OCI-LY7 (cell line): ENCODE measurements at regions of chr9 and their contacts with region 1.

Region 1: DNA sequence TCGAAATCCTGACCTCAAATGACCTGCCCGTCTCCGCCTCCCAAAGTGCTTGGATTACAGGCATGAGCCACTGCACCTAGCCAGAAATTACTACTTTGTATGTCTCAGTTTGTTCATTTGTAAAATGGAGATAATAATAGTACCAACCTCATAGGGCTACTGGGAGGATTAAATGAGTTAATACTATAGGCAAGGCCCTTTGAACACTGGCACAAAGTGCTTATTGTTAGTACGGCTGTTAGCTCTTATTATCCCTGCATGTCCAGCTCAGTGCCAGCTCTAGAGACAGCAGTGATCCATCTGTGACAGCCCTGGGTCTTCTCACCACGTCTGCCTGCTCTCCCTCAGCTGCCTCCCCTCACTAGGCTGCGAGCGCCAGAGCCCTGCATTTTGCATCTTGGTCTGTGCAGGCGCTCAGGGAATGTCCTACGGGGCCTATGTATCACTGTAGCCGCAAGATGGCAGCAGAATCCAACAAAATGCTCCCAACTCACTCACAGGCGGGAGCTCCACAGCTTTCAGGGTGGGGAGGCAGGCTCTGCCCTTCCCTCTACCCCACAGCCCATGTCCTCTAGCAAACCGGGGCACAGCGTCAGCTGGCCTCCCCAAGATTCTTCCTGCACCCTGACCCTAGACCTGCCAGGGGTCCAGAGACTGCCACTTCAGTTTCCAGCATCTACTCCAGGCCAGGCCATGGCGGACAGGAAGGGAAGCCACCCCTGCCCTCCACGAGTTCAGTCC is 17.7 kb upstream of the AKNA start:
- DNase-seq: peak; percentile 90
- H3K4me3 ChIP-seq: no peak overlapping the region
- H3K27ac ChIP-seq: no peak overlapping the region
- H3K4me1 ChIP-seq: no peaks in the 10 kb centered on the region
- CTCF ChIP-seq: peak; percentile 89

Region 2: GRCh38 chr9:114317665-114318357 is 87.7 kb before region 1 on chr9:
- CTCF ChIA-PET with region 1: no interaction called
- POLR2A ChIA-PET with region 1: no interaction called
- intact Hi-C with region 1: no loop called
- DNase-seq: peak; percentile 36
- H3K4me3 ChIP-seq: no peak overlapping the region
- H3K27ac ChIP-seq: no peak overlapping the region
- H3K4me1 ChIP-seq: no peaks in the 10 kb centered on the region
- CTCF ChIP-seq: no peak

Region 3: GRCh38 chr9:114452219-114453165 is 47.0 kb after region 1 on chr9:
- CTCF ChIA-PET with region 1: no interaction called
- POLR2A ChIA-PET with region 1: no interaction called
- intact Hi-C with region 1: no loop called
- DNase-seq: peak; percentile 76
- H3K4me3 ChIP-seq: peak overlapping the region; percentile 42
- H3K27ac ChIP-seq: peak overlapping the region; percentile 59
- H3K4me1 ChIP-seq: peaks cover 24% of the 10 kb centered on the region
- CTCF ChIP-seq: no peak

Region 4: GRCh38 chr9:114487607-114488300 is 82.3 kb after region 1 on chr9:
- CTCF ChIA-PET with region 1: no interaction called
- POLR2A ChIA-PET with region 1: no interaction called
- intact Hi-C with region 1: loop called (anchors 5 kb)
- DNase-seq: peak; percentile 77
- H3K4me3 ChIP-seq: no peak overlapping the region
- H3K27ac ChIP-seq: no peak overlapping the region
- H3K4me1 ChIP-seq: no peaks in the 10 kb centered on the region
- CTCF ChIP-seq: peak; percentile 93

Region 5: DNA sequence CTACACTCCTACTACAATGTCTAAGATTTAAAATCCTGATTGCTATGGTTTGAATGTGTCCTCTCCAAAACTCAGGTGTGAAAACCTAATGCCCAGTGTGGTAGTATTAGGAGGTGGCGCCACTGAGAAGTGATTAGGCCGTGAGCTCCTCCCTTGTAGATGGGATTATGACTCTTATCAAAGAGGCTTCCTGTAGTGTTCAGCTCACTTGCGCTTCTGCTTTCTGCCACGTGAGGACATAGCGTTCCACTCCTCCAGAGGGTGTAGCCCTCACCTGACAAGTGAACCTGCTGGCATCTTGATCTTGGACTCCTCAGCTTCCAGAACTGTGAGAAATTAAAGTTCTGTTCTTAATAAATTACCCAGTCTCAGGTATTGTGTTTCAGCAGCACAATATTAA is 132.8 kb after region 1 on chr9:
- CTCF ChIA-PET with region 1: interaction called, 6 read pairs
- POLR2A ChIA-PET with region 1: no interaction called
- intact Hi-C with region 1: loop called (anchors 1 kb)
- DNase-seq: peak; percentile 84
- H3K4me3 ChIP-seq: no peak overlapping the region
- H3K27ac ChIP-seq: no peak overlapping the region
- H3K4me1 ChIP-seq: peaks cover 26% of the 10 kb centered on the region
- CTCF ChIP-seq: peak; percentile 84

Region 6: GRCh38 chr9:114681594-114682332 is 276.3 kb after region 1 on chr9 and contains the start of gene TEX48:
- CTCF ChIA-PET with region 1: no interaction called
- POLR2A ChIA-PET with region 1: no interaction called
- intact Hi-C with region 1: loop called (anchors 1 kb)
- DNase-seq: peak; percentile 74
- H3K4me3 ChIP-seq: no peak within 1 kb of the TSS
- H3K27ac ChIP-seq: no peak within 1 kb of the TSS
- H3K4me1 ChIP-seq: peaks cover 4% of the 10 kb centered on the region
- CTCF ChIP-seq: peak; percentile 84
- total RNA-seq, gene TEX48: not detected in 2 replicates

Region 7: DNA sequence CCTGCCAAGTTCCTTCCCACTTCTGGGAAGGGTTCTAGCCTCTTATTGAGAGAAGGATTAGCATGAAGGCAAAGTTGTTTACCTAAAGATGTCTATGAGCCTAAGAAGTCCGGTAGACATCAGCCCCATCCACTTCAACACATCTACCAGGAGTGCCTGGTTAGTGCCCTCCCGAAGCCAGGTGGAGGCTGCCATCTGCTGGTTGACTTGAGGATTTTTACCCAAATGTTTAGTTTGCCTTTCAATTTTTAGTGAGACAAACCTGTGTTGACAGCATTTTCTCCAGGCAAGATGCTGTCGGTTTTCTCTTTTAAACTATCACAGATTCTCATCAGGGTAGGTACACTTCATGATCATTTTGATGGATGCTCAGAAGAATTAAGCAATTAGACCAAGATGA is 608.5 kb after region 1 on chr9:
- CTCF ChIA-PET with region 1: interaction called, 4 read pairs
- POLR2A ChIA-PET with region 1: no interaction called
- intact Hi-C with region 1: loop called (anchors 1 kb)
- DNase-seq: peak; percentile 83
- H3K4me3 ChIP-seq: no peak overlapping the region
- H3K27ac ChIP-seq: no peak overlapping the region
- H3K4me1 ChIP-seq: peaks cover 4% of the 10 kb centered on the region
- CTCF ChIP-seq: peak; percentile 95